Posterior vena cava (tissue), 2 donors: ENCODE measurements at regions of chr15 and their contacts with region 1.

Region 1: GRCh38 chr15:71278989-71279756 is 163.9 kb downstream of the THSD4 start:
- DNase-seq: no peak

Region 2: GRCh38 chr15:69777356-69777755 is 1501.8 kb before region 1 on chr15:
- intact Hi-C with region 1: loop called in 1 of 2 experiments (anchors 10 kb)
- DNase-seq: no peak

Region 3: DNA sequence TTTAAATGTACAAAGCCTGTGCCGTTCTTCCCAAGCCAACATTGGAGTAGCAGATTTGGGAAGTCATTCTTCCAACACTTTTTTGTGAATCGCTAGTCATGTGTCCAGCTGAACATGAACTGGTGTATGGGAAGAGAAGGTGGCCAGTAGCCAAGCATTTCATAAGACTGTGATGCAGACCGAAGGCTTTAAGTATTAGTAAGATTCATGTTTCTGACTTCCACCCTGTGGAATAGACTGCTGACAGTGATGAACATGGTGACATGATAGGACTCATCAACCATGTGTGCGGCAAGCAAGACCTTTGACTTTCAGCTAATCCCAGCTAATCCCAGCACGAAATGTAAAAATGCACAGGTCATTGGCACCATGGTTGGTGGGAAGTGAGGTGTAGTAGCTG is 212.2 kb before region 1 on chr15:
- intact Hi-C with region 1: no loop called
- DNase-seq: no peak

Region 4: DNA sequence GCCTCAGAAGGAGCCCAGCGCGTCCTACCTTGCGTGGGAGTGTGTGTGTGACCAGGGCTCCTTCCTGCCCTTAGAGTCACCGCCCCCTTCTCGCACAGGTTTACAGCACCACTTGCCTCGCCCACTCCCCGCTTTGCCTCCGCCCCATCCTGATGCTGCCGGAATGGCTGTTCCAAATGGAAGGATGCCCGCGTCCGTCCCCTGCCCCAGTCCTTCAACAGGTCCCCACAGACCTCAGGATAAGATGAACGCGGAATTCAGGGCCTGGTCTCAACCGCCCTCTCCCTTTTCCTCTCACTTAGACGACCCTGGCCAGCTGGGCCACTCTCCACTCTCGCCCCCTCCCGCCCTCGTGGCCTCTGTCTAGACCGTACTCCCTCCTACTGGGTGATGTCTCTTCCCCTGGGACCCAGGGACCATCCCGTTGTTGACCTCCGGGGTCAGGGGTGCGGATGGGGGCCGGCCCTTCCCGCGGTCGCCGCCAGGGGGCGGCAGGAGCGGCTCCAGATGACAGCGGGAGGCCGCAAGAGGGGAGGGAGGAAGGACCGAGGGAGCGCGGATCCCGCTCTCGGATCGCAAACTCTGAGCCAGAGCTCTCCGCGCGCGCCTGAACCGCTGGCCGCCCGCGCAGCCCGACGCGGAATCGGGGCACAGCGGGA is 164.1 kb before region 1 on chr15 and contains the start of gene THSD4:
- intact Hi-C with region 1: loop called in 1 of 2 experiments (anchors 5 kb)
- DNase-seq: peak; percentile 87
- total RNA-seq, gene THSD4: 16.3 to 18.8 TPM

Region 5: GRCh38 chr15:71329041-71329440 is 49.9 kb after region 1 on chr15:
- intact Hi-C with region 1: no loop called
- DNase-seq: peak; percentile 84